CD8-positive, alpha-beta T cell (primary cell): ENCODE measurements at regions of chr11 and their contacts with region 1.

Region 1: GRCh38 chr11:35617687-35618496 is at the start of gene FJX1:
- DNase-seq: peak in 2 of 9 experiments; percentile 5 to 18
- ATAC-seq: no peak
- H3K4me3 ChIP-seq: no peak within 1 kb of the TSS
- H3K4me3 Mint-ChIP-seq: peak within 1 kb of the TSS; percentile 79
- H3K27ac ChIP-seq: no peak within 1 kb of the TSS
- H3K27ac Mint-ChIP-seq: no peak within 1 kb of the TSS
- H3K4me1 ChIP-seq: peaks cover 17% of the 10 kb centered on the region
- H3K4me1 Mint-ChIP-seq: peaks cover 14% of the 10 kb centered on the region
- H3K27me3 ChIP-seq: peaks cover 5 to 25% of the 10 kb centered on the region in 2 experiments
- H3K27me3 Mint-ChIP-seq: peaks cover 48% of the 10 kb centered on the region
- CTCF ChIP-seq: no peak
- total RNA-seq, gene FJX1: not detected

Region 2: DNA sequence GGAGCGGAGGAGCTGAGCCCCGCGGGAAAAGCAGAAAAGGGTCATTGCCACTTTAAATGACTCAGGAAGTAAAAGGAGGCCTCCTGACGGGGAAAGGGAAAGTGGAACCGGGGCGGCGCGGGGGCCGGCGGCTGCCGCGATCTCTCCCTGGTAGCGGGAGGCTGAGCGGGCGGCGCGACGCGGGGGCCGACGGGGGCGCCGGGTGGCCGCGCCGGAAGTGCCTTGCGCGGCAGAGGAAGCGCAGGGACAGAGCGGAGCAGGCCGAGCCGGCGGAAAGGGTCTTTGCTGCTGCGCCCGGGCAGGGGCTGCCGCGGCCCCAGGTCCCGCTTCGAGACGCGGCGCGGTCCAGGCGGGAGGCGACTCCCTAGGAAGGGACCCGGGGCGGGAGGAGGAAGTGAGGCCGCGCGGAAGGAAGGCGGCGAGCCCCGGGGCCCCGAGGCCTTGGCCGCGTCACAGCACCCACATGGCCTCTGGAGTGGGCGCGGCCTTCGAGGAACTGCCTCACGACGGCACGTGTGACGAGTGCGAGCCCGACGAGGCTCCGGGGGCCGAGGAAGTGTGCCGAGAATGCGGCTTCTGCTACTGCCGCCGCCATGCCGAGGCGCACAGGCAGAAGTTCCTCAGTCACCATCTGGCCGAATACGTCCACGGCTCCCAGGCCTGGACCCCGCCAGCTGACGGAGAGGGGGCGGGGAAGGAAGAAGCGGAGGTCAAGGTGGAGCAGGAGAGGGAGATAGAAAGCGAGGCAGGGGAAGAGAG is 44.9 kb after region 1 on chr11 and contains the start of gene TRIM44:
- CTCF ChIA-PET with region 1: no interaction called
- POLR2A ChIA-PET with region 1: no interaction called
- intact Hi-C with region 1: loop called in 1 of 2 experiments (anchors 2 kb)
- DNase-seq: peak; percentile 57 to 89 (median 79)
- ATAC-seq: peak; percentile 81
- H3K4me3 ChIP-seq: peak within 1 kb of the TSS; percentile 91 to 97
- H3K4me3 Mint-ChIP-seq: peak within 1 kb of the TSS; percentile 96
- H3K27ac ChIP-seq: peak within 1 kb of the TSS; percentile 84 to 85
- H3K27ac Mint-ChIP-seq: peak within 1 kb of the TSS; percentile 97
- H3K4me1 ChIP-seq: peaks cover 23% of the 10 kb centered on the region
- H3K4me1 Mint-ChIP-seq: peaks cover 47% of the 10 kb centered on the region
- H3K27me3 ChIP-seq: peaks cover 0 to 4% of the 10 kb centered on the region in 2 experiments
- H3K27me3 Mint-ChIP-seq: no peaks in the 10 kb centered on the region
- CTCF ChIP-seq: no peak
- total RNA-seq, gene TRIM44: 25.7 to 29.5 TPM

Region 3: DNA sequence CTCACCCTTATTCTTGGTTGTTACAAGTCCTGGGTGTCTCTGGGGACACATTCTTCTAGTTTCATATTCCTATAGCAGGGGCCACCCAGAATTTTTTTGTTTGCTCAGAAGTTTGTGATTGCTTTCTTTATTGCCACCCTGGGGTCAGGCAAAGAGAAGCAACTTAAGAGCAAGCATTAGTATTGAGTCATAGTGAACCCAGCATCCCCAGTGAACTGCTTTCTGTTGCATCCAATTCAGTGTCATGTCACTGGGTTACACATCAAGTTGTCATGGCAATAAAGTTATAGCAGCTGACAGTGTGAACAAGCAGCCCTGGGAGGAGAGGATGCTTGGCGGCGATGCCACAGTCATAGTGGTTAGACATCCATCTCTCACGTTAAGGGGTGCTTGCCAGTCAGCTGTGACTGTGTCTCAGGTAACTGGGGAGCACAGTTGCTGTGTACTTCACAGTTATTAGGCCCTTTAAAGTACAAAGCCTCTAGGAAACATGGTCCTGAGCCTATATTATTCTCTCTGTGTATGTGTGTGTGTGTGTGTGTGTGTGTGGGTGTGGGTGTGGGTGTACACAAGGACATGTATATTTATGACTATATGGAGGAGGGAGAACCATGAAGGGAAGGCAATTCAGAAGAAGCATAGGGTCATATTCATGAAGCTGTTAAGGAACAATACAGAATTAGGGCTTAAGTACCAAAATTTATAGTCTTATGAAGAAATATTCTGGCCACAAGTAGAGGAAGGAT is 97.2 kb after region 1 on chr11:
- CTCF ChIA-PET with region 1: no interaction called
- POLR2A ChIA-PET with region 1: no interaction called
- intact Hi-C with region 1: no loop called
- DNase-seq: peak in 2 of 9 experiments; percentile 18 to 27
- ATAC-seq: no peak
- H3K4me3 ChIP-seq: no peak overlapping the region
- H3K4me3 Mint-ChIP-seq: no peak overlapping the region
- H3K27ac ChIP-seq: no peak overlapping the region
- H3K27ac Mint-ChIP-seq: peak overlapping the region; percentile 18
- H3K4me1 ChIP-seq: no peaks in the 10 kb centered on the region
- H3K4me1 Mint-ChIP-seq: peaks cover 57% of the 10 kb centered on the region
- H3K27me3 ChIP-seq: no peaks in the 10 kb centered on the region
- H3K27me3 Mint-ChIP-seq: no peaks in the 10 kb centered on the region
- CTCF ChIP-seq: no peak

Region 4: DNA sequence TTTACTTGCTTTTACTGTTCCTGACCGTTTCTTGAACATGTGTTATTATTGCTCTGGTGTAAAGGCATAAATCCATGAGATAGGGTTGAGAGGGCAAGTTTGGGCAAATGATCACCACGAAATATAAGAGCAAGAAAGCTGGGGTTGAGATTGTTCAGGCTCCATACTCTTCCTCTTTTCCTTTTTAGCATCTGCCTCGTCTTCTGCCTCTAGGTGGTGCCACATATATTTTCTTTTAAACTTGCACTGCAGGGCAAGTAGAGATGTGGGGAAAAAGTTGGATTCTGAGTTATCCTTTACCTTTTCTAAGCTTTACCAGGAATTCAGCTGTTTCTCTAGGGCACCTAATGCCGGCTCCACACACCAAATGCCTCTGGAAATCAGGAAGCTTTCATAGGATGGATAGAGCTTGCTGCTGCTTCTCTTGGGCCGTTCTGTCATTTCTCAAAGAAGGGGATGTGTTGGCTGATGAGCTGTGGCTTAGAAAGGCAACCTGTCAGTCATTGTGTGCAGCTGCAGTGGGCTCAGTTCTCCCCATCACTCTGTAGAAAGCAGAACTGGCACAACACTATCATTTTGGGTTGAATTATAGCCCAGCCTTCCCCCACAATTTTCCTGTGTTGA is 424.2 kb after region 1 on chr11:
- CTCF ChIA-PET with region 1: no interaction called
- POLR2A ChIA-PET with region 1: no interaction called
- intact Hi-C with region 1: loop called in 1 of 2 experiments (anchors 10 kb)
- DNase-seq: no peak
- ATAC-seq: no peak
- H3K4me3 ChIP-seq: no peak overlapping the region
- H3K4me3 Mint-ChIP-seq: no peak overlapping the region
- H3K27ac ChIP-seq: no peak overlapping the region
- H3K27ac Mint-ChIP-seq: no peak overlapping the region
- H3K4me1 ChIP-seq: no peaks in the 10 kb centered on the region
- H3K4me1 Mint-ChIP-seq: no peaks in the 10 kb centered on the region
- H3K27me3 ChIP-seq: no peaks in the 10 kb centered on the region
- H3K27me3 Mint-ChIP-seq: peaks cover 3% of the 10 kb centered on the region
- CTCF ChIP-seq: no peak

Region 5: DNA sequence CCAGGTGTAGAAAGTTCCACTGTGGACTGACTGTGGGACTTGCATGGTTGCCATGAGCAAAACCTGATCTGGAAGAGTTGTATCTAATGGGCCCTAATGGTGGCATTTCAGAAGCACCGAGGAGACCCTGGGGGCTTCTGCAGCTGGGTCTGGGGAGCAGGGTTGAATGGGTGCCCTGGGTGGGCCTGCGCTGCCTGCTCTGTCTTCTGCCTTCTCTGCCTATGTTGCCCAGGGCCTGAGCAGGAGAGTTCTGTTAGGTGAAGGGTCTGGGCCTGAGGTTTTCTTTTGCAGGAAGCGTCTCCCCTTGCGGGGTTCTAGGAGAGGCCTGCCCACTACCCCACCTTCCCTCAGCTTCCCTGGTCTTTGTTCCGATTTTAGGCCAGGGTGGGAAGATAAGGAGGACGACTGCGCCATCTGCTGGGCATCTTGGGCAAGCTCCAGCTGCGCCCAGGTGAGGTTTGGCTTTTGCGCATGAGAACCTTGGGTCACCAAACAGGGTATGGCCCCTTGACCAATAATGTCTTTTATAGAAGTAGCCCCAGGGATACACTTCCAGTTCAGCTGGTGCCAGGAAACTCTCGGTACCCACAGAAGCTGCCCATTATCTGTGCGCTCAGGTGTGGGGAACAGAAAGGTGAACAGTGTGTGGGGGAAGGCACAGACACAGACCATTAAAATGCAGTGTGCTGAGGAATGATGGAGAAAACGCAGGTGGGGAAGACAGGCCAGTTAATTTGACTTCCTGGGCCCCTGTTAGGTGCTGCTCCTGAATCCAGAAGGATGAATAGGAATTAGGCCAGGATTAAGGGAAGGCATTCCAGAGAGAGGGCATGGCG is 648.1 kb after region 1 on chr11:
- CTCF ChIA-PET with region 1: interaction called, 36 read pairs
- POLR2A ChIA-PET with region 1: no interaction called
- intact Hi-C with region 1: loop called in 1 of 2 experiments (anchors 1 kb)
- DNase-seq: peak; percentile 13 to 72 (median 48)
- ATAC-seq: peak; percentile 63
- H3K4me3 ChIP-seq: no peak overlapping the region
- H3K4me3 Mint-ChIP-seq: no peak overlapping the region
- H3K27ac ChIP-seq: no peak overlapping the region
- H3K27ac Mint-ChIP-seq: no peak overlapping the region
- H3K4me1 ChIP-seq: no peaks in the 10 kb centered on the region
- H3K4me1 Mint-ChIP-seq: no peaks in the 10 kb centered on the region
- H3K27me3 ChIP-seq: no peaks in the 10 kb centered on the region
- H3K27me3 Mint-ChIP-seq: peaks cover 18% of the 10 kb centered on the region
- CTCF ChIP-seq: peak; percentile 71

Region 6: GRCh38 chr11:36492724-36493304 is 874.9 kb after region 1 on chr11:
- CTCF ChIA-PET with region 1: interaction called, 4 read pairs
- POLR2A ChIA-PET with region 1: no interaction called
- intact Hi-C with region 1: loop called (anchors 1 kb)
- DNase-seq: peak in 4 of 9 experiments; percentile 22 to 76 (median 48)
- ATAC-seq: peak; percentile 69
- H3K4me3 ChIP-seq: no peak overlapping the region
- H3K4me3 Mint-ChIP-seq: no peak overlapping the region
- H3K27ac ChIP-seq: no peak overlapping the region
- H3K27ac Mint-ChIP-seq: no peak overlapping the region
- H3K4me1 ChIP-seq: peaks cover 8% of the 10 kb centered on the region
- H3K4me1 Mint-ChIP-seq: peaks cover 20% of the 10 kb centered on the region
- H3K27me3 ChIP-seq: no peaks in the 10 kb centered on the region
- H3K27me3 Mint-ChIP-seq: no peaks in the 10 kb centered on the region
- CTCF ChIP-seq: peak; percentile 92